Heart left ventricle (tissue), 16 donors: ENCODE measurements at regions of chr1 and their contacts with region 1.

Region 1: GRCh38 chr1:101059945-101060542 is 34.5 kb upstream of the DPH5 start:
- DNase-seq: no peak
- ATAC-seq: no peak
- H3K4me3 ChIP-seq: no peak overlapping the region
- H3K27ac ChIP-seq: no peak overlapping the region
- H3K4me1 ChIP-seq: peaks cover 0 to 8% (median 0%) of the 10 kb centered on the region in 12 donors
- H3K27me3 ChIP-seq: no peaks in the 10 kb centered on the region
- CTCF ChIP-seq: no peak
- POLR2A ChIP-seq: no peak

Region 2: DNA sequence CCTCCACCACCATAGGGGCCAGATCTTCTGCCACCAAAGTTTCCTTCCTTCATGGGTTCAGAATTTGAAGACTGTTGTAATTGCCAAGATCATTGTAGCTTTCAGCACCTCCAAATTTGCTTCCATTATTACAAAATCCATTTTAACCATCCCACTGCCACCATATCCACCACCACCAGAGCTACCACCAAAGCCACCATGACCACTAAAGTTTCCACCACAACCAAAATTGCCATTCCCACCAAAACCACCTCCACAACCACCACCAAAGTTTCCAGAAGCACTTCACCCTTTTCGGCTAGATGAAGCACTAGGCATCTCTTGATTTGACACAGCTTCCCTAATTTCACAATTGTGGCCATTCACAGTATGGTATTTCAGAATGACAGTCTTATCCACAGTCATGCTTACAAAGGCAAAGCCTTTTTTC is 118.9 kb before region 1 on chr1:
- intact Hi-C with region 1: no loop called
- DNase-seq: no peak
- ATAC-seq: no peak
- H3K4me3 ChIP-seq: no peak overlapping the region
- H3K27ac ChIP-seq: no peak overlapping the region
- H3K4me1 ChIP-seq: no peaks in the 10 kb centered on the region
- H3K27me3 ChIP-seq: no peaks in the 10 kb centered on the region
- CTCF ChIP-seq: no peak
- POLR2A ChIP-seq: no peak

Region 3: DNA sequence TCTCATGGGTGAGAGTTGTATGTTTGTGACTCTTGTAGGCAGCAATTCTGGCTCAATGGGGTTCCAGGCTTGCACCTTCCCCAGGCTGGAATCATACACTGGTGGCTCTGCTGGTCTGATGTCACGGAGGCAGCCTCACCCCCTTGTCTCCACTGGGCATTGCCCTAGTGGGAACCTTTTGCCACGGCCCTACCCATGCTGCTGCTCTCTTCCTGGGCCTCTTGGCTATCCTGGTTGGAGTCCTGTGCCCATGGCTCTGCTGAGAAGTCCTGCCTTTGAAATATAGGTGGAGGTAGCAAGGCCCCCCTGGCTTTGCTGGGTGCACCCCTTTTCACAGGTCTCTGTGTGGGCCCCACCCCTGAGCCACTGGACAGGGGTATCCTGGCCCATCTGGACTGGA is 35.5 kb after region 1 on chr1:
- intact Hi-C with region 1: loop called in 1 of 10 experiments (anchors 5 kb)
- DNase-seq: no peak
- ATAC-seq: no peak
- H3K4me3 ChIP-seq: no peak overlapping the region
- H3K27ac ChIP-seq: no peak overlapping the region
- H3K4me1 ChIP-seq: no peaks in the 10 kb centered on the region
- H3K27me3 ChIP-seq: no peaks in the 10 kb centered on the region
- CTCF ChIP-seq: no peak
- POLR2A ChIP-seq: no peak